Dendritic cell treated with granulocyte-macrophage colony-stimulating factor and Interleukin-4, amounts not matched to agents 40 ng/mL and 50 ng/mL, for 4 days (primary cell): ENCODE measurements at regions of chrX and their contacts with region 1.

Region 1: DNA sequence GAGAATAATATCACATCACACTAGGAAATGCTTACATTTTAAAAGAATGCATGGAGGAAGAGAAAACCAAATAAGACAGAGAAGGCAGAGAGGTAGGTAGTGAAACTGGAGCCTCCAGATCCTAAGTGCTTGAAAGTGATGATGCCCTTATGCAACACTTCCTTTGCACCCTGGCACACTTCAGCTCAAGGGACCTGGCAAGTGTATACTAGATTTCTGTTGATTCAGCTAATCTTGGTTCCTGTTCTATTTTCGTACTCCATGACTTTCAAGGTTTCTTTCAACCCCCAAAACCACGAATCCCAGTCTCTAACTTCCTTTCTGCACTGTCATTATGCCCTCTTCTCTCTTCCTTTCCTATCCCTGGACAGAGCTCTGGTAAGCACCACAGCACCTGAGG is 36.9 kb upstream of the SH3KBP1 start:
- H3K4me3 Mint-ChIP-seq: no peak overlapping the region
- H3K27ac Mint-ChIP-seq: peak overlapping the region; percentile 74
- H3K4me1 Mint-ChIP-seq: peaks cover 17% of the 10 kb centered on the region
- H3K27me3 Mint-ChIP-seq: no peaks in the 10 kb centered on the region

Region 2: GRCh38 chrX:19972984-19973383 is 48.7 kb after region 1 on chrX:
- intact Hi-C with region 1: loop called (anchors 10 kb)
- H3K4me3 Mint-ChIP-seq: no peak overlapping the region
- H3K27ac Mint-ChIP-seq: no peak overlapping the region
- H3K4me1 Mint-ChIP-seq: peaks cover 8% of the 10 kb centered on the region
- H3K27me3 Mint-ChIP-seq: no peaks in the 10 kb centered on the region